CD4-positive, alpha-beta memory T cell (primary cell): ENCODE measurements at regions of chr4 and their contacts with region 1.

Region 1: DNA sequence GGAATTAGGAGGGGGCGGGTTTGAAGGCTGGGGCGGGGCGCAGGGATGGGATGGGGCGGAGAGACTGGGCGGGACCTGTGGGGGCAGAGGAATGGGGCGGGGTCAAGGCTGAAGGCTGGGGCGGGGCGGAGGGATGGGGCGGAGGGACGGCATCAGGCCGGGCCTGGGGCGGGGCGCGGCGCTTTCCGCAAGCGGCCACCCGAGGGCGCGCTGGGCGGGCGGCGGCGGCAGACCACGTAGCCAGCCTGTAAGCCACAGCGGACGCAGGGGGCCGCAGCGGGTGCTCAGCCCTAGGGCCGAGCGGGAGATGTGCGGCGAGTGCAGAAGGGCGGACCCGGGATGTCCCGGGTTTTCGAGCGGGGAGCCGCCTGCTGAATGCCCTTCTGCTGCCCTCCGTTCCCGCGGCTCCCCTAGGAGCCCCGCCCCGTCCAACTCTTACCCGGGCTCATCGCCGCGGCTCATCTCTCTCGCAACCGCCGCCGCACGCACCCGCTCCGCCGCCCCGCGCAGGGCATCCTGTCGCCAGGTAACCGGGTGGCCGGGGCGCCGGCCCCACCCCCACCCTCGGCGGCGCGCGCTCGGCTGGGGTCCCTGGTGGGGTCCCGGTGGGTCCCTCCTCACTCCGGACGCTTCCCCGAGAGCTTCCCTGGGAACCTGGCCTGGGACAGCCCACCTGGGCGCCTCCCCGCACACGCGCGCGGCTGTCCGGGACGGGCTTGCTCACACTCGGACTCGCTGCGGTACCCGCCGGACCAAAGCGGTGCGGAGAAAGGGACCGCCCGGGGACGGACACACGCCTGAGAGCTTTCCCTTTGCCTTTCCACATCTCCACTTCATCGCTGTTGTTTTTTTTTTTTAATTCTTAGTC is at the start of gene CCDC110:
- DNase-seq: peak; percentile 83 to 90 (median 87)
- H3K4me3 ChIP-seq: peak within 1 kb of the TSS; percentile 72 to 88
- H3K4me3 Mint-ChIP-seq: peak within 1 kb of the TSS; percentile 88 to 94 (median 92)
- H3K27ac ChIP-seq: peak within 1 kb of the TSS; percentile 28
- H3K27ac Mint-ChIP-seq: peak within 1 kb of the TSS; percentile 69 to 93 (median 90)
- H3K4me1 ChIP-seq: peaks cover 16% of the 10 kb centered on the region
- H3K4me1 Mint-ChIP-seq: peaks cover 6 to 17% (median 10%) of the 10 kb centered on the region in 4 donors
- H3K27me3 ChIP-seq: no peaks in the 10 kb centered on the region
- H3K27me3 Mint-ChIP-seq: peaks cover 0 to 2% of the 10 kb centered on the region in 2 donors
- total RNA-seq, gene CCDC110: 0.19 to 0.90 TPM

Region 2: GRCh38 chr4:184733654-184734524 is 737.6 kb before region 1 on chr4 and contains the start of gene CENPU:
- CTCF ChIA-PET with region 1: no interaction called
- POLR2A ChIA-PET with region 1: no interaction called
- intact Hi-C with region 1: loop called (anchors 10 kb)
- DNase-seq: peak; percentile 93 to 95 (median 94)
- H3K4me3 ChIP-seq: peak within 1 kb of the TSS; percentile 59 to 81
- H3K4me3 Mint-ChIP-seq: peak within 1 kb of the TSS; percentile 88 to 96 (median 92)
- H3K27ac ChIP-seq: peak within 1 kb of the TSS; percentile 56
- H3K27ac Mint-ChIP-seq: peak within 1 kb of the TSS; percentile 86 to 95 (median 92)
- H3K4me1 ChIP-seq: peaks cover 15% of the 10 kb centered on the region
- H3K4me1 Mint-ChIP-seq: peaks cover 8 to 23% (median 14%) of the 10 kb centered on the region in 4 donors
- H3K27me3 ChIP-seq: no peaks in the 10 kb centered on the region
- H3K27me3 Mint-ChIP-seq: no peaks in the 10 kb centered on the region
- total RNA-seq, gene CENPU: 2.1 to 2.2 TPM

Region 3: GRCh38 chr4:185203486-185204237 is 267.8 kb before region 1 on chr4 and contains the start of gene CFAP97:
- CTCF ChIA-PET with region 1: no interaction called
- POLR2A ChIA-PET with region 1: no interaction called
- intact Hi-C with region 1: loop called (anchors 1 kb)
- DNase-seq: peak; percentile 88 to 90 (median 90)
- H3K4me3 ChIP-seq: peak within 1 kb of the TSS; percentile 47 to 83
- H3K4me3 Mint-ChIP-seq: peak within 1 kb of the TSS; percentile 91 to 99 (median 96)
- H3K27ac ChIP-seq: peak within 1 kb of the TSS; percentile 82
- H3K27ac Mint-ChIP-seq: peak within 1 kb of the TSS; percentile 98 to 99 (median 99)
- H3K4me1 ChIP-seq: peaks cover 48% of the 10 kb centered on the region
- H3K4me1 Mint-ChIP-seq: peaks cover 31 to 66% (median 48%) of the 10 kb centered on the region in 4 donors
- H3K27me3 ChIP-seq: no peaks in the 10 kb centered on the region
- H3K27me3 Mint-ChIP-seq: no peaks in the 10 kb centered on the region
- total RNA-seq, gene CFAP97: 41.6 to 41.9 TPM

Region 4: GRCh38 chr4:185425647-185426352 is 45.7 kb before region 1 on chr4 and contains the start of gene UFSP2:
- CTCF ChIA-PET with region 1: interaction called, 6 read pairs
- POLR2A ChIA-PET with region 1: interaction called, 6 read pairs
- intact Hi-C with region 1: loop called (anchors 1 kb)
- DNase-seq: peak; percentile 91 to 96 (median 92)
- H3K4me3 ChIP-seq: peak within 1 kb of the TSS; percentile 45 to 77
- H3K4me3 Mint-ChIP-seq: peak within 1 kb of the TSS; percentile 89 to 98 (median 96)
- H3K27ac ChIP-seq: peak within 1 kb of the TSS; percentile 99
- H3K27ac Mint-ChIP-seq: peak within 1 kb of the TSS; percentile 92 to 100 (median 100)
- H3K4me1 ChIP-seq: peaks cover 24% of the 10 kb centered on the region
- H3K4me1 Mint-ChIP-seq: peaks cover 23 to 46% (median 29%) of the 10 kb centered on the region in 4 donors
- H3K27me3 ChIP-seq: no peaks in the 10 kb centered on the region
- H3K27me3 Mint-ChIP-seq: peaks cover 1 to 2% of the 10 kb centered on the region in 2 donors
- total RNA-seq, gene UFSP2: 30.1 to 30.3 TPM

Region 5: DNA sequence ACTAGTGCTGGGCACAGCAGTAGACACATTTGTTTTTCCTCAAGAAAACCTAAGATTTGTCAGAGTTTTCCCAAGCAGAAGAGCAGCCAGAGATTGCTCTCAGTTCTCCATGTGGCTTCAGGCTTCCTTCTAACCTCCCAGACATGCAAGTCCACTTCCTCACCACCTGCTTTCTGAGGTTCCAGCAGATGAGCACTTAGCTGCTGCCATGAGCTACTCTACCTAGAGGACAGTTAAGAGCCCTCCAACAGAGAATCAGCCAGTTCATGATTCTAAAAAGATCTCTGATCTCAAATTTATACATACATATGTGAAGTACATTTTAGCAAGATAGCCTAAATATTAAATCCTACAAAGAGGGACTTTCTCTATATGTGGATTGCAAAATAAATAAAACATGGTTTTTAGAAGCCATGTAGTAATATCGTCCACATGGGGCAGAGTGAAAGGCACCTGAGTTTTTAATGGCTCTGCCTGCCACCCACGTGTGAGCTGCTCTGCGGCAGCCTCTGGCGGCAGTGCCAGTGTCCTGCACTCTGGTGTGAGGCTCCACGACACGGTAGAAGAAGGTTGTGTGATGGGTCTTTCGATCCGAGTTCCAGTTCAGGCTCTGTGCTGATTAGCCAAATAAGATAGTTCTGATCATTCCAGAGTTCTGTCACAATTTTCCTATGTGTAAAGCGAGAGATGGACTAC is 730.2 kb after region 1 on chr4:
- CTCF ChIA-PET with region 1: no interaction called
- POLR2A ChIA-PET with region 1: no interaction called
- intact Hi-C with region 1: loop called (anchors 5 kb)
- DNase-seq: peak; percentile 41 to 77 (median 53)
- H3K4me3 ChIP-seq: no peak overlapping the region
- H3K4me3 Mint-ChIP-seq: peak overlapping the region in 7 of 8 donors; percentile 2 to 65 (median 30)
- H3K27ac ChIP-seq: no peak overlapping the region
- H3K27ac Mint-ChIP-seq: peak overlapping the region; percentile 19 to 94 (median 79)
- H3K4me1 ChIP-seq: no peaks in the 10 kb centered on the region
- H3K4me1 Mint-ChIP-seq: peaks cover 16 to 52% (median 25%) of the 10 kb centered on the region in 4 donors
- H3K27me3 ChIP-seq: no peaks in the 10 kb centered on the region
- H3K27me3 Mint-ChIP-seq: no peaks in the 10 kb centered on the region